Activated naive CD4-positive, alpha-beta T cell treated with anti-CD3 and anti-CD28 coated beads for 36 hours (primary cell): ENCODE measurements at regions of chr2 and their contacts with region 1.

Region 1: DNA sequence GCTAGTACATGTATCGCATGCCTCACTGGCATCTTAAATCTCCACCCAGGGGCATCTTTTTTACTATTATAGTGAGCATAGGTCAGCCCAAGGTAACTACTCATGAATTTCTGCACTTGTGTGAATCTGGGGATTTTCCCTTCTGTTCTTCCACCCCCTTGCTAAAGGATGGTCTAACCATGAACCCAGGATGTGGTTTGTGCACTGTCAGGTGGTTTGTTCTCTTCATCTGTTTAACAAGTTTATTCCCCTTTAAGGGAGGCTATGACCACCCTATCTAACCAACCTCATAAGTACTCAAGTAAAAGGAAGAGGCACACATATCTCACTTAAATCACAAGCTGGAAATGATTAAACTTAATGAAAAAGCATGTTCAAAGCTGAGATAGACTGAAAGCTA is 243.0 kb downstream of the RPRM start:
- DNase-seq: peak; percentile 55
- H3K4me3 Mint-ChIP-seq: no peak overlapping the region
- H3K27ac Mint-ChIP-seq: peak overlapping the region; percentile 46
- H3K4me1 Mint-ChIP-seq: peaks cover 16% of the 10 kb centered on the region
- H3K27me3 Mint-ChIP-seq: no peaks in the 10 kb centered on the region

Region 2: DNA sequence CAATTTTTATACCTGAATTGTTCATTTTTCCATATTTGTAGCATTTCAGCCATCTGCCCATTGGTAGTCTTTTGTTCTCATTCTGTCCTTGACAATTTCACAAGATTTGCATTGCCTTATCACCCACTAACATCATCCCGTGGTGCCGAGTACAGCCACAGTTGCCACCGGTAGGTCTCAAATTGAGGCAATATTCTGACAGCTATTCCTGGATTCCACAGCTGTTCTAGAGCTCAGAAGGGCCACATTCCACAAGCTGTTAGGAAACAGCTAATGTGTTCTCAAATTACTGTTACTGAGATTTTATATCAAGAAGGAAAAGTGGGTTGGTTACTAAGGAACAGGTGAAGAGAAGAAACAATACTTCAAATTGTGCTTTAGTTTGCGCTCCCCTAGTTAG is 64.3 kb after region 1 on chr2:
- CTCF ChIA-PET with region 1: no interaction called
- intact Hi-C with region 1: loop called (anchors 5 kb)
- DNase-seq: no peak
- H3K4me3 Mint-ChIP-seq: no peak overlapping the region
- H3K27ac Mint-ChIP-seq: no peak overlapping the region
- H3K4me1 Mint-ChIP-seq: no peaks in the 10 kb centered on the region
- H3K27me3 Mint-ChIP-seq: no peaks in the 10 kb centered on the region

Region 3: DNA sequence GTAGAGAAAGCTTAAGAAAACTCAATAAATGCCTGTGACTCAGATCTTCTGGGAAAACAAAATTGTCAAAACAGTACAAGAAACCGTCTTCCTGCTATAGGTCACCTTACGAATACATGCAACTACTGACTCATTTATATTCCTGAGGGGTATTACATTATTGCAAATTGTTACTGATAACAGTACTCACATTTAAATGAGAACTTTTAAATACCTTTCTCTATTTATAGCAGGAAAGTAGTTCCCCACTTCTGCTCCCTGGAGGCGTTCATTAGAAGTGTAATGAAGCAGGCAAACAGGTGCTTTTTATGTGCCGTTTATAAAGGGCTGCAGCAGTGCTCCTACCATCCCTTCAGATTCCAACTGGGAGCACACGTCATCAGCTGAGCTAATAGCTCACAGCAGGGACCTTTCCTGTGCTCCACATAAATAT is 308.1 kb after region 1 on chr2:
- CTCF ChIA-PET with region 1: no interaction called
- intact Hi-C with region 1: loop called (anchors 10 kb)
- DNase-seq: peak; percentile 8
- H3K4me3 Mint-ChIP-seq: no peak overlapping the region
- H3K27ac Mint-ChIP-seq: peak overlapping the region; percentile 20
- H3K4me1 Mint-ChIP-seq: peaks cover 7% of the 10 kb centered on the region
- H3K27me3 Mint-ChIP-seq: peaks cover 3% of the 10 kb centered on the region